GM12878 (cell line): ENCODE measurements at regions of chr2 and their contacts with region 1.

Region 1: GRCh38 chr2:129396980-129397599 is 582.4 kb upstream of the RAB6C start:
- DNase-seq: peak; percentile 21
- ATAC-seq: peak; percentile 94
- H3K4me3 ChIP-seq: no peak overlapping the region
- H3K27ac ChIP-seq: no peak overlapping the region
- H3K4me1 ChIP-seq: no peaks in the 10 kb centered on the region; the same call in 1 of the 2 replicates
- H3K27me3 ChIP-seq: no peaks in the 10 kb centered on the region
- CTCF ChIP-seq: peak; percentile 78 to 87 (median 81)
- EP300 ChIP-seq: no peak
- POLR2A ChIP-seq: no peak
- RAD21 ChIP-seq: peak; percentile 94

Region 2: DNA sequence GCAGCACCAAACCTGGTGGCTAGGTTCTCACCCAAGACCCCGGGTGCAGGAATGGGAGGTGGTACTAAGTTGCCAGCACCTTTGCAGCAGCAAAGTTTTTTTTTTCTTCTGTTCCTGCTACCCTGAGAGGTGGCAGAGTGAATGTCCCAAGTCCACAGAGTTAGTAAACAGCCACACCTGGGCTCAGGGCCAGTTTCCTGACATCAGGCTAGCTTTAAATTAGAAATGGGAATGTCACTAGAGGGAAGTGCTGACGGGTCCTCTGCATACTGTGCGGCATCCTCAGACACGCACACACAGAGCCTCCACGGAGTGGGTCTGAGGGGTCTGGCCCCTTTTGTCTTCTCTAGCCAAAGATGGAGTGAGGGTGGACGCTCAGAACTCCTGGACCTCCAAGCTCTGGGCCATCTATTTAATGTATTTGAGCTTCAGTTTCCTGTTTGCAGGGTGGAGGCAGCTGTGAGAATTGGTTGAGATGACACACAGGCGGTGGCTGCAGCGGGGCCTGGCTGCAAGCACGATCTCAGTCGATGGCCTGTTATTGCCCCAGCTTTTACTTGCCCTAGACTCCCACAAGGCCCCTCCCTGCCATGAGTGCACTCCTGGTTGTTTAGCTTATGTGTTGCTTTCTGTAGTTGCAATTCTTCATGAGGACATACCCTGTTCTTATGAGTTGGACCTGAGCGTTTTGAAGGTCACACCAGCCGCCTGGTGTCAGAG is 327.1 kb before region 1 on chr2:
- CTCF ChIA-PET with region 1: no interaction called
- POLR2A ChIA-PET with region 1: no interaction called
- RAD21 ChIA-PET with region 1: no interaction called
- SMC1A ChIA-PET with region 1: no interaction called
- in situ Hi-C with region 1: no loop called
- intact Hi-C with region 1: loop called (anchors 10 kb)
- DNase-seq: no peak
- ATAC-seq: no peak
- H3K4me3 ChIP-seq: no peak overlapping the region
- H3K27ac ChIP-seq: no peak overlapping the region
- H3K4me1 ChIP-seq: no peaks in the 10 kb centered on the region
- H3K27me3 ChIP-seq: no peaks in the 10 kb centered on the region
- CTCF ChIP-seq: no peak
- EP300 ChIP-seq: no peak
- POLR2A ChIP-seq: no peak
- RAD21 ChIP-seq: no peak

Region 3: GRCh38 chr2:129191235-129191929 is 205.7 kb before region 1 on chr2:
- CTCF ChIA-PET with region 1: interaction called, 3 read pairs
- POLR2A ChIA-PET with region 1: no interaction called
- RAD21 ChIA-PET with region 1: no interaction called
- SMC1A ChIA-PET with region 1: interaction called, 6 read pairs
- in situ Hi-C with region 1: no loop called
- intact Hi-C with region 1: loop called (anchors 2 kb)
- DNase-seq: no peak
- ATAC-seq: no peak
- H3K4me3 ChIP-seq: no peak overlapping the region
- H3K27ac ChIP-seq: no peak overlapping the region
- H3K4me1 ChIP-seq: no peaks in the 10 kb centered on the region
- H3K27me3 ChIP-seq: no peaks in the 10 kb centered on the region
- CTCF ChIP-seq: no peak; a peak in 1 of 6 replicates
- EP300 ChIP-seq: no peak
- POLR2A ChIP-seq: no peak
- RAD21 ChIP-seq: no peak

Region 4: DNA sequence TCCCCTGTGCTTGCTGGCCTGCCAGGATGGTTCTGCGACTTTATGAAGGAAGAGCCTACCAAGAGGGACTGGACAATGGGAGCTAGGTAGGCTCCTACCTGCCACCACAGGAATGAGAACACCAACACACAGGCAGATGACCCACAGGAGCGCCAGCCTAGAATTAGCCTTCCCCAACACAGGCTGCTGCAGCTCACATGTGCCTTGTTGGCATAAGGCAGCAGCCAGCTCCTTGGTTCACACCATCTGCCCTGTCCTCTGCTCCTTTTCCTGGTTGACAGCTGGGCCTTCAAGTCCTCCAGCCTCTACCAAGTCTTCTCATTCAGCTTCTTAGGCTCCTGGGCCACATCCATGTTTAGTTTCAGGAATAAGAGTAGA is 123.1 kb before region 1 on chr2:
- CTCF ChIA-PET with region 1: no interaction called
- POLR2A ChIA-PET with region 1: no interaction called
- RAD21 ChIA-PET with region 1: no interaction called
- SMC1A ChIA-PET with region 1: no interaction called
- in situ Hi-C with region 1: no loop called
- intact Hi-C with region 1: no loop called
- DNase-seq: no peak
- ATAC-seq: no peak
- H3K4me3 ChIP-seq: no peak overlapping the region
- H3K27ac ChIP-seq: no peak overlapping the region
- H3K4me1 ChIP-seq: no peaks in the 10 kb centered on the region
- H3K27me3 ChIP-seq: no peaks in the 10 kb centered on the region
- CTCF ChIP-seq: no peak
- EP300 ChIP-seq: no peak
- POLR2A ChIP-seq: no peak
- RAD21 ChIP-seq: no peak

Region 5: DNA sequence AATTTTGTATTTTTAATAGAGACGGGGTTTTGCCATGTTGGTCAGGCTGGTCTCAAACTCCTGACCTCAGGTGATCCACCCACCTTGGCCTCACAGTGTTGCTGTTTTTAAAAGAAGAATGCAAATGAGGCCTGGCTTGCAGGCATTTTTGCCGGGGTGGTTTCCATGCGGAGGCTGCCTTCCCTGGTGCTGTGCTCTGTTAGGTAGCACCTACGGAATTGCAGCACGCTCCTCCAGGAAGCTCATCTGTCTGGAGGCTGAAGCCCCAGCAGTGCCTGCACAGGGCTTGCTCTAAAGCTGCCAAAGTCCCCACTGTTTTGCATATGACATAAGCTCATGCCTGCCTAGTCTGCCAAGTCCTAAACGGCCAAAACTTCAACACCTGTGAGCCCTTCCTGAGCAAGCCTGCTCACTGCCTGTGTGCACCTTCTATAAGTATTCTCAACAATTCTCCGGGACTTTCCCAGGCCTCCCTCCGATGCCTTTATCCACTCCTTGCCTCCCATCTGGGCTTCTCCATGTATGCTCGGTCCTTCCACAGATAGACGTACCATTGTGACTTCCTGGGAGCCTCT is 31.1 kb after region 1 on chr2:
- CTCF ChIA-PET with region 1: no interaction called
- POLR2A ChIA-PET with region 1: no interaction called
- RAD21 ChIA-PET with region 1: no interaction called
- SMC1A ChIA-PET with region 1: no interaction called
- in situ Hi-C with region 1: no loop called
- intact Hi-C with region 1: no loop called
- DNase-seq: no peak
- ATAC-seq: 0 out of 3 replicates have a peak, but pooled peaks have one; percentile 17
- H3K4me3 ChIP-seq: no peak overlapping the region
- H3K27ac ChIP-seq: no peak overlapping the region
- H3K4me1 ChIP-seq: no peaks in the 10 kb centered on the region
- H3K27me3 ChIP-seq: no peaks in the 10 kb centered on the region
- CTCF ChIP-seq: no peak
- EP300 ChIP-seq: no peak
- POLR2A ChIP-seq: no peak
- RAD21 ChIP-seq: no peak